Activated naive CD4-positive, alpha-beta T cell treated with anti-CD3 and anti-CD28 coated beads for 36 hours (primary cell): ENCODE measurements at regions of chr15 and their contacts with region 1.

Region 1: GRCh38 chr15:65028921-65029735 is at the start of gene MTFMT:
- DNase-seq: peak; percentile 95
- H3K4me3 Mint-ChIP-seq: peak within 1 kb of the TSS; percentile 87
- H3K27ac Mint-ChIP-seq: peak within 1 kb of the TSS; percentile 7
- H3K4me1 Mint-ChIP-seq: peaks cover 21% of the 10 kb centered on the region
- H3K27me3 Mint-ChIP-seq: peaks cover 8% of the 10 kb centered on the region
- total RNA-seq, gene MTFMT: 15.1 to 17.1 TPM

Region 2: GRCh38 chr15:64825431-64826294 is 203.5 kb before region 1 on chr15 and contains the start of gene PIF1:
- CTCF ChIA-PET with region 1: no interaction called
- intact Hi-C with region 1: loop called (anchors 2 kb)
- DNase-seq: peak; percentile 95
- H3K4me3 Mint-ChIP-seq: peak within 1 kb of the TSS; percentile 84
- H3K27ac Mint-ChIP-seq: peak within 1 kb of the TSS; percentile 81
- H3K4me1 Mint-ChIP-seq: peaks cover 20% of the 10 kb centered on the region
- H3K27me3 Mint-ChIP-seq: peaks cover 8% of the 10 kb centered on the region
- total RNA-seq, gene PIF1: 38.4 to 43.9 TPM

Region 3: DNA sequence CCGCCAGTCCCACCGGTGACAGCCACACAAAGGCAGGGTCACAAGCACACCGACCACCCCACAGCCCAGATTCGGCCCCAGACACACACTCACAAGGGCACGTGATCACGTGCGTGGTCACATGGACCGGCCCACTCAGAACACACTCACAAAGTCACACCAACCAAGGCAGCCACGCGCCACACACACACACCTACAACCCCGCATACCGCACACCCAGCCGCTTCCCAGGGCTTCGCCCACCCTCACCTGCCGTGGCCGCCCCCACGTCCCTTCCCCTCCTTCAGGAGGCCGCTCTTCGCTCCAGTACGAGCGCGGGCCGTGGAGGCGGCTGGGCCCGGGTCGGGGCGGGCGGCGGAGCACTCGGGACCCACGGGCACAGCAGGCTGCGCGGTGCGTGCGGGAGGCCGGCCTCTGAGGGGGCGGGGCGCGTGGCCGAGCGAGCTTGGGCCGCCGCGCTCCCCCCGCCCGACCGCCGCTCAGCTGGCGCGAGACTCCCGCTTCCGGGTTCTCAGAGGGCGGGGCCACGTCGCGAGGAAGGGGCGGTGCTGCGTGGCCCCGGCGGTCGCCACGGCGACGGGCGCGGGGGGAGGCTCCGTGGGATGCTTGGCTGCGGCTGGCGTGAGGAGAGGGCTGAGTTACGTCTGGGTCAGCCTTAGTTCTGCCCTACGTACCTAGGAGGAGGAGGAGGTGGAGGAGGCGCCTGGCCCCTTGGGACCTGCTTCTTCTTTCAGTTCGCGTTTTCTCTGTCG is 39.5 kb before region 1 on chr15 and contains the start of gene SPG21:
- CTCF ChIA-PET with region 1: interaction called, 4 read pairs
- intact Hi-C with region 1: loop called (anchors 2 kb)
- DNase-seq: peak; percentile 88
- H3K4me3 Mint-ChIP-seq: peak within 1 kb of the TSS; percentile 94
- H3K27ac Mint-ChIP-seq: peak within 1 kb of the TSS; percentile 82
- H3K4me1 Mint-ChIP-seq: peaks cover 36% of the 10 kb centered on the region
- H3K27me3 Mint-ChIP-seq: no peaks in the 10 kb centered on the region
- total RNA-seq, gene SPG21: 67.7 to 68.0 TPM

Region 4: DNA sequence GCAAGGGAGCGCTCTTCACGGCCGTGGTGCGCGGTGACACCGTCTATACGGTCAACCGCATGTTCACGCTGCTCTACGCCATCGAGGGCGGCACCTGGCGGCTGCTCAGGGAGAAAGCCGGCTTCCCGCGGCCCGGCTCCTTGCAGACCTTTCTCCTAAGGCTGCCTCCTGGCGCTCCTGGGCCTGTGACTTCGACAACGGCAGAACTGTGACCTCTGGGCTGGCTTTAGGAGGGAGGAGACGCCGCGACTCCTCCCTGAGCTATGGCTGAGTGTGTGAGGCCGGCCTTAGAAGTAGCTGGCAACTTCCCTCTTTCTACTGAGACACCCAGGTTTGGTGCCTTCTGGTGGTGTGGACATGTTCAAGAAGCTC is 48.8 kb after region 1 on chr15:
- CTCF ChIA-PET with region 1: interaction called, 31 read pairs
- intact Hi-C with region 1: loop called (anchors 1 kb)
- DNase-seq: peak; percentile 70
- H3K4me3 Mint-ChIP-seq: no peak overlapping the region
- H3K27ac Mint-ChIP-seq: no peak overlapping the region
- H3K4me1 Mint-ChIP-seq: peaks cover 18% of the 10 kb centered on the region
- H3K27me3 Mint-ChIP-seq: peaks cover 29% of the 10 kb centered on the region

Region 5: DNA sequence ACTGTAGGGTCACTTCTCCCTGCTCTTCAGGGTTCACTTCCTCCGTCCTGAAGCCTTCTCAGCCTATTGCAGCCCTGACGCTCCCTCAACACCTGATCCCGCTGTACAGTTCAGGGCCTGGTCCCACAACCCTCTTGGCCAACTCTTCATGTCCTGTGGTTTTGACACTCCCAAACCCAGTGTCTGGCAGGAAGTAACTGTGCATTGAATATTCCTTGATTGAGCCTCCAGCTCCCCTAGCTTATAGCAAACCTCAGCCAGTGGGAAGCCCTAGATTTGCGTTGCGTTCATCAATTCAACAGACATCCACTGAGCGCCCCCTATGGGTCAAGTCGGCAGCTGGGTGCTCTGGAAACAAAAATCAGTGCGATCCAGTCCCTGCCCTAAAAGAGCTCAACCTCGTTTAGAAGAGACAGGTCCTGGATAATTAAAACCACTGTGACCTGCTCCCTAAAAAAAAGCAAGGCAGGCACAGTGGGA is 72.3 kb after region 1 on chr15:
- CTCF ChIA-PET with region 1: interaction called, 14 read pairs
- intact Hi-C with region 1: no loop called
- DNase-seq: peak; percentile 76
- H3K4me3 Mint-ChIP-seq: no peak overlapping the region
- H3K27ac Mint-ChIP-seq: no peak overlapping the region
- H3K4me1 Mint-ChIP-seq: no peaks in the 10 kb centered on the region
- H3K27me3 Mint-ChIP-seq: no peaks in the 10 kb centered on the region

Region 6: DNA sequence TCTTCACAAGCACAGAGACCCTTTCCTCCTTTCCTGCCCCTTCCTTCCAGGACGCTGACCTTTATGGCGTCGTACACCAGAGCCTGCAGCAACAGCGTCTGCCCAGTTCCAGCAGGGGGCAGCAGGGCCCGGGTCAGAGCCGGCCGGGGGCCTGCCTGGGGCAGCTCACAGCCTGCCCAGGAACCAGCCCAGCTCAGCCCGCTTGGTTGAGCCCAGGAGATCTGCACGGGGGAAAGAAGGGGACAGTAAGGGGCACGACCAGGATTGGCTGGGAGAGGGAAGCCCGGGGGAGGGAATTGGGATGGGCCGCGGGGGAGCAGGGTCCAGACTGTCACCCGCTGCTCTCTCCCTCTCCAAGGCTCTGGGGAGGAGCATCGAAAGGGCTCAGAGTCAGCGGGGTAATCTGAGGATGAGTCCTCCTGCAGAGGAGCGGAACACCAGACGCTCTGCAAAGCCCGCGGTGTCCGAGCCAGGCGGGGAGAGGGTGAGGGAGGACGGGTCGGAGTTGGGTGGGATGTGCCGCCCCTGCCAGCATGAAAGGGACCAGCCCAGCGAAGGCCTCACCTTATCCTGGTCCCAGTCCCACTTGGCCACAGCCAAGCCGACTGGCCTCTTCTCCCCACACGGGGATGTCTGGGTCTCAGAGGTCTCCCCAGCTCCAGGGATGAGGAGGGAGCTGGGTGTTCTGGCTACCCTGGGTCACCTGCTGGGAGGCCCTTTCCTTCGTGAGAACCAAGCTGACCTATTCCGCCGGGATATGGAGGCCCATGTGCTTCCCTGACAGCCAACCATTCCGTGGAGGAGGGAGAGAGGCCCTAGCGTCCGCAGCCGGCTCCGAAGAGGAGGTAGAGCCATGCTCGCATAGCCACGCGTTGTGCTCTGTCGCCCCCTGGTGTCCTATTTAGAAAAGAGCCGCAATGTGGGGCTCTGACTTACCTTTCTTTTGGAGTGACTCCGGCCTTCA is 356.0 kb after region 1 on chr15:
- CTCF ChIA-PET with region 1: interaction called, 4 read pairs
- intact Hi-C with region 1: loop called (anchors 1 kb)
- DNase-seq: peak; percentile 92
- H3K4me3 Mint-ChIP-seq: peak overlapping the region; percentile 83
- H3K27ac Mint-ChIP-seq: peak overlapping the region; percentile 46
- H3K4me1 Mint-ChIP-seq: peaks cover 11% of the 10 kb centered on the region
- H3K27me3 Mint-ChIP-seq: peaks cover 9% of the 10 kb centered on the region